K562 (cell line): ENCODE measurements at regions of chrX and their contacts with region 1.

Region 1: GRCh38 chrX:71532753-71533425 is at the start of gene OGT:
- DNase-seq: peak; percentile 73 to 98 (median 80)
- ATAC-seq: peak; percentile 88
- H3K4me3 ChIP-seq: peak within 1 kb of the TSS; percentile 95
- H3K27ac ChIP-seq: peak within 1 kb of the TSS; percentile 97
- H3K4me1 ChIP-seq: peaks cover 0 to 16% of the 10 kb centered on the region in 2 experiments; a peak in 3 of 5 replicates
- H3K27me3 ChIP-seq: no peaks in the 10 kb centered on the region
- CTCF ChIP-seq: 0 out of 6 replicates have a peak, but pooled peaks of 1 of the 3 experiments have one; percentile 1
- EP300 ChIP-seq: peak; percentile 49; the same call in 1 of the 2 replicates
- POLR2A ChIP-seq: peak; percentile 94
- RAD21 ChIP-seq: peak in 1 of 2 experiments; percentile 15; a peak in 2 of 4 replicates
- polyA plus RNA-seq, gene OGT: 38.9 to 52.6 TPM

Region 2: DNA sequence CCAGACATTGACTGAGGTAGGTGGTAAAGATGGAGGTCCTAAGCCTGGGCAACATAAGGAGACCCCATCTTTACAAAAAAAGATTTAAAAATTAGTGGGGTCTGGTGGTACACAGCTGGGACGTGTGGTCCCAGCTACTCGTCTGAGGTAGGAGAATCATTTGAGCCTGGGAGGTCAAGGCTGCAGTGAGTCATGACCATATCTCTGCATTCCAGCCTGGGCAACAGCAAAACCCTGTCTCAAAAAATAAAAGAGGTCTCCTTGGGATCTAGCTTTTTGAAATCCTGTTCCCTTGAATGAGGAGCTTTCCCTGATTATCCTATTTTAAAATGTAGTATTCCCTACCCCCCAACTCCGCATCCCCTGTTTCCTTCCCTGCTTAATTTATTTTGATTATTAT is 78.7 kb before region 1 on chrX:
- CTCF ChIA-PET with region 1: no interaction called
- POLR2A ChIA-PET with region 1: interaction called, 5 read pairs
- in situ Hi-C with region 1: no loop called
- intact Hi-C with region 1: loop called (anchors 5 kb)
- DNase-seq: peak in 1 of 4 experiments; percentile 30
- ATAC-seq: no peak
- H3K4me3 ChIP-seq: no peak overlapping the region
- H3K27ac ChIP-seq: no peak overlapping the region
- H3K4me1 ChIP-seq: peaks cover 18 to 22% of the 10 kb centered on the region in 2 experiments; a peak in 4 of 5 replicates
- H3K27me3 ChIP-seq: no peaks in the 10 kb centered on the region
- CTCF ChIP-seq: no peak
- EP300 ChIP-seq: no peak
- POLR2A ChIP-seq: no peak
- RAD21 ChIP-seq: no peak

Region 3: GRCh38 chrX:71550578-71550977 is 17.7 kb after region 1 on chrX:
- CTCF ChIA-PET with region 1: no interaction called
- POLR2A ChIA-PET with region 1: interaction called, 52 read pairs
- in situ Hi-C with region 1: no loop called
- intact Hi-C with region 1: no loop called
- DNase-seq: no peak
- ATAC-seq: no peak
- H3K4me3 ChIP-seq: no peak overlapping the region
- H3K27ac ChIP-seq: no peak overlapping the region
- H3K4me1 ChIP-seq: no peaks in the 10 kb centered on the region
- H3K27me3 ChIP-seq: no peaks in the 10 kb centered on the region
- CTCF ChIP-seq: no peak
- EP300 ChIP-seq: no peak
- POLR2A ChIP-seq: no peak; the same call in 1 of the 2 replicates
- RAD21 ChIP-seq: no peak